Right ventricle myocardium superior (tissue), 1 donor: ENCODE measurements at regions of chr5 and their contacts with region 1.

Region 1: DNA sequence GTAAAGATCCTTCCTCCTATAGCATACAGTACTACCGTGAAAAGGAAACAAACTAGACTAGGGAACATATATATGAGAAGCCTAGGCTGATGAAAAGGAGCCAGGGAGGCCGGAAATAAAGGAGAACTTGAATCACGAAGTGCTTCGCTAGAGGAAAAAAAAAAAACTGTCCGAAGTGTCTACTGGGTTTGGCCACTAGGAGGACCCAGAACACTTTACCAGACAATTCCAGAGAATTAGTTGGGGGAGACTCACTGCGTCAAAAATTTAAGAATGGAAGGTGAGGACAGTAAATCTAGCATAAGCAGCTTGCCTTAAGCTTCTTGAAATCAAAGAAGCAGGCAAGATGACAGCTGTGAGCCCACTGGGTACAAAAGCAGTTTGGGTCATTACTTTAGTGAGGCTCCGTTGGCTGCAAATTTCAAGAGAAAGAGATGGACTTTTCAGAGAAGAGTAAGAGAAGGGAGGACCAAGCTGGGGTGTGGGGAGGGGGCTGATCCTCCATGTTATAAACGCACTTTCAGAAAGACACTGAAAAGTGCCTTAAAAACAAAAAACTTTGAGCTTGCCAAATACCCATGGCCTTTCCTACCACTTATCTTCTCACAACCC is 47.4 kb downstream of the P4HA2 start:
- DNase-seq: no peak
- ATAC-seq: peak; percentile 73

Region 2: DNA sequence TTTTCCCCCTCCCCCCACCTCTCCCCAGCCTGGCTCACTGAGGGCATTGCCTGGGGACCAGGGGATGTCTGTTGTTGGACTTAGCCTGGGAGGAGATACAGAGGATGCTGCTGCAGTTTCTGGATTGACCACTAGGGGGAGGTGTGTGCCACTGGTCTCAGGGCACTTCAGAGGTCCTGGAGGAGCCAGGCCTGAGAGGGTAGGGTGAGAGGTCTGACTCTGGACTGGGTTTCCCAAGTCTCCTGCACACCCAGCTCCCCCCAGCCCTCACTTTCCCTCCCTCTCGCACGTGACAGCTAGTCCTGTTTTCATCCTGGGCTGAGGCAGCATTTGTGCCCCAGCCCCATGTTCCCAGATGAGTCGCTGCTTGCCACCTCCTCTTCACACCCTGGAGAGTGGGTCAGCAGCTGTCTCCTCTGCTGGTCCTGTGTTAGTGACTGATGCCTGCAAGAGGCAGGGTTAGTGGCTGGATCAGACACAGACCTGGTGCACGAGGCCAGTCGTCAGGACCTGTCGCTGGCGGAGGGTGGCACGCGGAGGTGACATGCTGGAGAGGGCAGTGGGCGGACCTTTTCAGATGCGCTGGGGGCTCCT is 115.4 kb before region 1 on chr5:
- intact Hi-C with region 1: loop called (anchors 10 kb)
- DNase-seq: peak; percentile 72
- ATAC-seq: peak; percentile 84

Region 3: GRCh38 chr5:132215329-132215728 is 35.1 kb after region 1 on chr5:
- intact Hi-C with region 1: no loop called
- DNase-seq: peak; percentile 97
- ATAC-seq: peak; percentile 85

Region 4: DNA sequence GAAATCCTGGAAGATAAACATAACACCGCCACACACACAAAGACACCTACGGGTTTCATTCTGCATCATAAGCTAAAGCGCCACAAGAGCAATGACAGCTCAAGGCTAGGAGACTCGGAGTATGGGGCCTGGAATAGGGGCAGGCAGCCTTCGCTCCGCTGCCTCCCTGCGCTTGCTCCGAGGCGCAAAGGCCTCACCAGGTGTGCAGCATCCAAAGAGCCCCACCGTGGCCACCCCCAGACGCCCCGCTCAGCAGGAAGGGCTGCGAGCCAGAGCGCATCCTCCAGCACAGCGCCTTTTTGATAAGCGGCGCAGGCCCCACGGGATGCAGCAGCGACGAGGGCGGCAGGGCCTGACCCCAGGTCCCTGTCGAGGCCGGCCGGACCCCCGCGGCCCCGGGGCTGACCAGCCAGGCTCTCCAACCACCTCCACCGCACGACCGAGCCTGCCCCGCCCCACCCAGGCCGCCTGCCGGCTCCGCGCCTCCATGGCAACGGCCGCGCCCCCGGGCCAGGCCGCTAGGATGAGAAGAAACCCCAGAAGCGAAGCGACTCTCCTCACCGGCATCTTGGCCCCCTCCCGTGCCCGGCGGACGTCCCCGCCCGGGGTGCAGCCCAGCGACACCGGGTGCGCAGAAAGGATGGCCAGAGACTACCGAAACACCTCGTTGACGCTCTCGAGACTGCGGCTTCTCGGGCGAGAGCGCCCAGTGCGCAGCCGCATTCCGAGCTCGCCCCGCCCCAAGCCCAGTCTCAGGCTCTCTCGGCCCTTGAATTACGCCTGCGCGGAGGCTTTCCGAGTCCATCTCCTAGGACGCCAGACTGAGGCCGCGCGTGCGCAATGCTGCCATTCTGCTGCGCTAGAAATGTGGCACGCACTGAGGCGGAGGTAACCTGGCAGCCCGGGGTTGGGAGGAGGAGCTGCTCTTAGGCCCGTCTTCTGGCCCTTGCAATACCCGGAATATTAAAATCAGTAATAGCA is 556.9 kb after region 1 on chr5 and contains the start of gene KIF3A:
- intact Hi-C with region 1: no loop called
- DNase-seq: peak; percentile 99
- ATAC-seq: peak; percentile 100
- total RNA-seq, gene KIF3A: 9.1 TPM